CD4-positive, alpha-beta T cell (primary cell): ENCODE measurements at regions of chr10 and their contacts with region 1.

Region 1: GRCh38 chr10:112471878-112472487 is 25.0 kb downstream of the VTI1A start:
- DNase-seq: peak in 3 of 14 experiments; percentile 52 to 62 (median 60)
- ATAC-seq: peak; percentile 73
- H3K4me3 ChIP-seq: no peak overlapping the region
- H3K4me3 Mint-ChIP-seq: no peak overlapping the region
- H3K27ac ChIP-seq: no peak overlapping the region
- H3K27ac Mint-ChIP-seq: no peak overlapping the region
- H3K4me1 ChIP-seq: peaks cover 2% of the 10 kb centered on the region
- H3K4me1 Mint-ChIP-seq: peaks cover 13% of the 10 kb centered on the region
- H3K27me3 ChIP-seq: no peaks in the 10 kb centered on the region
- H3K27me3 Mint-ChIP-seq: no peaks in the 10 kb centered on the region
- CTCF ChIP-seq: peak; percentile 78

Region 2: GRCh38 chr10:112039823-112040222 is 432.2 kb before region 1 on chr10:
- CTCF ChIA-PET with region 1: no interaction called
- POLR2A ChIA-PET with region 1: no interaction called
- intact Hi-C with region 1: no loop called
- DNase-seq: no peak
- ATAC-seq: no peak
- H3K4me3 ChIP-seq: no peak overlapping the region
- H3K4me3 Mint-ChIP-seq: no peak overlapping the region
- H3K27ac ChIP-seq: no peak overlapping the region
- H3K27ac Mint-ChIP-seq: no peak overlapping the region
- H3K4me1 ChIP-seq: no peaks in the 10 kb centered on the region
- H3K4me1 Mint-ChIP-seq: no peaks in the 10 kb centered on the region
- H3K27me3 ChIP-seq: peaks cover 0 to 5% of the 10 kb centered on the region in 2 experiments
- H3K27me3 Mint-ChIP-seq: peaks cover 6% of the 10 kb centered on the region
- CTCF ChIP-seq: no peak

Region 3: DNA sequence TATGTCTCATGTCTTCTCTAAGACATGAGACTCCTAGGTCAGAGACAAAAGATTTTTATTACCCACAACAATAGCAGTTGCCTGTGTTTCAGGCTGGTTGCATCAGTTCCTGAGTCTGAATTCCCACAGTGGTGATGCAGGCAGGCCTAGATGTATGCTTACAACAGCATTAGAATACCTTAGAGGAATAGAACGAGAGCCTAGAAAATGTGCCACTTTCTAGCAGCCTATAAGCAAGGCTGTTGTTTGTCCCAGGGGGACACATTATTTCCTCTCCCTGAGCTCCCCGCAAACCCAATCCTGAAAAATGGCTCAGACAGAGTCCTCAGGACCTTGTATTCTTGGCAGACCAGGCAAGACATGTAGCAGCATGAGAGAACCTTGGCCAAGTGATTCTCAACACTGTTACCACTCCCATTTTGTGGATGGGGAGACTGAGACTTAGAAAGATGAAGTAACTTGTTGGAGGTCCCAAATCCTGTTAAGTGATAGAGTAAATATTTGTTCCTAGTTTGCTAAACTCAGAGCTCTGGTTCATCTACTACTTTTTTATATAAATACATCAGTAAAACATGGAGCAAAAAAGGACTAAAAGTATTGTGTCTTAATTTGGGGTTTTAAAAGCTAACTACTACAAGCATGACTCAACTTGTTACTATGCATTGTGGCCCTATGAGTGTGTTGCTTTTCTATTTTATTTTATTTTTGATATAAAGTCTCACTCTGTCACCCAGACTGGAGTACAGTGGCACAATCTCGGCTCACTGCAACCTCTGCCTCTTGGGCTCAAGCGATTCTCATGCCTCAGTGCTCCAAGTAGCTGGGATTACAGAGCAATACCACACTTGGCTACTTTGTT is 10.7 kb before region 1 on chr10:
- CTCF ChIA-PET with region 1: interaction called, 11 read pairs
- POLR2A ChIA-PET with region 1: no interaction called
- intact Hi-C with region 1: no loop called
- DNase-seq: no peak
- ATAC-seq: no peak
- H3K4me3 ChIP-seq: no peak overlapping the region
- H3K4me3 Mint-ChIP-seq: no peak overlapping the region
- H3K27ac ChIP-seq: no peak overlapping the region
- H3K27ac Mint-ChIP-seq: no peak overlapping the region
- H3K4me1 ChIP-seq: peaks cover 2% of the 10 kb centered on the region
- H3K4me1 Mint-ChIP-seq: peaks cover 15% of the 10 kb centered on the region
- H3K27me3 ChIP-seq: no peaks in the 10 kb centered on the region
- H3K27me3 Mint-ChIP-seq: no peaks in the 10 kb centered on the region
- CTCF ChIP-seq: no peak